ENCODE measurements at regions of chr10 and their contacts with region 1.

Region 1: GRCh38 chr10:62779487-62780248 is 24.9 kb upstream of the ADO start:
- DNase-seq: peak; percentile 40
- ATAC-seq: peak; percentile 99
- H3K4me3 Mint-ChIP-seq: peak overlapping the region; percentile 50
- H3K27ac Mint-ChIP-seq: peak overlapping the region; percentile 76
- H3K4me1 Mint-ChIP-seq: peaks cover 33% of the 10 kb centered on the region
- H3K27me3 Mint-ChIP-seq: no peaks in the 10 kb centered on the region
- CTCF ChIP-seq: no peak

Region 2: DNA sequence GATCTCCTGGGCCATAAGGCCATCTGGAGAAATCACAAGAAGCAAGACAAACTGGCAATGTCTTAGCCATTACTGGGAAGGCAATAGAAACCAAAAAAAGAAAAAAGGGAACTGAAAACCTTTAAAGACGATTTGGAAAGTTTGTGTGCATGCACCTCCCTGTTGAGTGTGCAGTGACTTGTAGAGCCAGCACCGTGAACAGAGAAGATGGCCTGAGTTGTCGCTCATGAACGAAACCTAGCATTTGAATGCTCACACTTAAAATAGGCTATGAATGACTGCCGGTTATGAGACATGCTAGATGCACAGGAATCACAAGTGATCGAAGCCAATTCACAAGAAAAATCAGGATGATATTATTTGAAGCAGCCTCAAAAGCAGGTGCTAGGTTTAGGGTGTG is 126.4 kb before region 1 on chr10:
- CTCF ChIA-PET with region 1: no interaction called
- POLR2A ChIA-PET with region 1: interaction called, 3 read pairs
- intact Hi-C with region 1: loop called (anchors 1 kb)
- DNase-seq: no peak
- ATAC-seq: peak; percentile 92
- H3K4me3 Mint-ChIP-seq: peak overlapping the region; percentile 55
- H3K27ac Mint-ChIP-seq: peak overlapping the region; percentile 87
- H3K4me1 Mint-ChIP-seq: peaks cover 66% of the 10 kb centered on the region
- H3K27me3 Mint-ChIP-seq: peaks cover 1% of the 10 kb centered on the region
- CTCF ChIP-seq: no peak

Region 3: DNA sequence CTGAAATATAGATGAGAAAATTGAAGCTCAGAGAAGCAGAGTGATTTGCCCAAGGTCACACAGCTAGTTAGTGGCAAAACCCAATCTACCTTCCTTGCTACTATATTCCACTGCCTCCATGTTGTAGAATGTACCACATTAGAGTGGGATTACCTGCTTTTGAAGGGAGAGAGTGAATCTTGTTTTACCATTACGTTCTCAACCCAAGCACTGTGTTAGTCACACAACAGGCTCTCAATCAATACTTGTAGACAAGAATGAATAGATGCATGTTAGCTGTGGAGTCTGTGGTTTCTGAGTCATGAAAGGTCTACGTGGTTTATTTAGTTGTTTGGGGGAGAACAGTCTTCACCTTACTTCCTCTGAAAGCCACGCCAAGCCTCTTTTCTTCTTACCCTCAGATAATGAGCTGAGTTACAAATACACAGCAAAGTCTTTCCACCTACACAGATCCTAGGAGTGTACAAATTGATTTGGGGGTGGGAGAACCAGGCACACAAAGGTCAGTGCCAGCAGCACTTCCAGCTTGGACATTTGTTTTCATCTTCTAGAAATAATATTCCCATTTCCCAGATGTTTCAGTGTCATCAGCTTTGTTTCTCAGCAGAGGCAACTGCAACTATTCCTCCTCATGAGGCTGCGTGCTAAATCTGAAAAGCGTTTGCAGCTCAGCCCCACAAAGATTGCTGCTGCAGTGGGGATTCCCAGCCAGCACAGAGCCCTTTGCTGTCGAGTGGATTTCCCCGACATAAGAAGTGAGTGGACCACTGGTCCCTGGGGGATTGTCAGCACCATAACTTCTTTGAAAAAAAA is 46.6 kb before region 1 on chr10:
- CTCF ChIA-PET with region 1: interaction called, 5 read pairs
- POLR2A ChIA-PET with region 1: interaction called, 17 read pairs
- intact Hi-C with region 1: loop called (anchors 1 kb)
- DNase-seq: peak; percentile 46
- ATAC-seq: peak; percentile 77
- H3K4me3 Mint-ChIP-seq: peak overlapping the region; percentile 62
- H3K27ac Mint-ChIP-seq: no peak overlapping the region
- H3K4me1 Mint-ChIP-seq: peaks cover 2% of the 10 kb centered on the region
- H3K27me3 Mint-ChIP-seq: no peaks in the 10 kb centered on the region
- CTCF ChIP-seq: no peak

Region 4: DNA sequence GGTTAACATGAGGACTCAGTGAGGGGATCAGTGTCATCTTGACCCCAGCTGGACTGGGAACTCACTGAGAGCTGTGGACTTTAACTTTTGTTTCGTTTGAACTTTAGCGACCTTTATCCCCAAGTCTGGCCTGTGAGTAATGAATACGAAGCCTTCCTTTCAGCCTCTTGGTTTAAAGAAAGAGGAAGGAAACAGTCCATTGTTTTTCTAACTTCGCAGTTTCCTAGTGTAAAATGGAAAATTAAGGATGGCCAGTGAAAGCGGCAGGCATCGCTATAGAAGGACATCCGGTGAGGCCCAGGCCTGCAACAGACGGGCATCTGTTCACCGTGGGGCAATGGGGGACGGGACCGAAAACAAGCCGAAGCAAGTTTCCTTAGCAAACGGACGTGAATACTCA is 19.3 kb before region 1 on chr10:
- CTCF ChIA-PET with region 1: interaction called, 3 read pairs
- POLR2A ChIA-PET with region 1: no interaction called
- intact Hi-C with region 1: loop called (anchors 2 kb)
- DNase-seq: no peak
- ATAC-seq: no peak
- H3K4me3 Mint-ChIP-seq: no peak overlapping the region
- H3K27ac Mint-ChIP-seq: no peak overlapping the region
- H3K4me1 Mint-ChIP-seq: peaks cover 20% of the 10 kb centered on the region
- H3K27me3 Mint-ChIP-seq: peaks cover 3% of the 10 kb centered on the region
- CTCF ChIP-seq: no peak

Region 5: GRCh38 chr10:62794306-62794705 is 14.6 kb after region 1 on chr10:
- CTCF ChIA-PET with region 1: no interaction called
- POLR2A ChIA-PET with region 1: no interaction called
- intact Hi-C with region 1: no loop called
- DNase-seq: no peak
- ATAC-seq: no peak
- H3K4me3 Mint-ChIP-seq: no peak overlapping the region
- H3K27ac Mint-ChIP-seq: no peak overlapping the region
- H3K4me1 Mint-ChIP-seq: no peaks in the 10 kb centered on the region
- H3K27me3 Mint-ChIP-seq: peaks cover 8% of the 10 kb centered on the region
- CTCF ChIP-seq: no peak

Measured in activated B cell treated with CpG ODN at 0.5 μM for 24 hours (primary cell).